PC-3 (cell line): ENCODE measurements at regions of chr4 and their contacts with region 1.

Region 1: GRCh38 chr4:97923096-97923495 is 220.2 kb downstream of the STPG2 start:
- DNase-seq: no peak
- ATAC-seq: no peak
- H3K4me3 ChIP-seq: no peak overlapping the region
- H3K27ac ChIP-seq: no peak overlapping the region
- H3K4me1 ChIP-seq: no peaks in the 10 kb centered on the region
- H3K27me3 ChIP-seq: no peaks in the 10 kb centered on the region
- CTCF ChIP-seq: no peak

Region 2: GRCh38 chr4:97938141-97938540 is 15.0 kb after region 1 on chr4:
- CTCF ChIA-PET with region 1: no interaction called
- POLR2A ChIA-PET with region 1: interaction called, 13 read pairs
- intact Hi-C with region 1: no loop called
- DNase-seq: no peak
- ATAC-seq: no peak
- H3K4me3 ChIP-seq: no peak overlapping the region
- H3K27ac ChIP-seq: no peak overlapping the region
- H3K4me1 ChIP-seq: peaks cover 12% of the 10 kb centered on the region
- H3K27me3 ChIP-seq: no peaks in the 10 kb centered on the region
- CTCF ChIP-seq: no peak